Activated naive CD4-positive, alpha-beta T cell treated with anti-CD3 and anti-CD28 coated beads for 36 hours (primary cell): ENCODE measurements at regions of chr5 and their contacts with region 1.

Region 1: GRCh38 chr5:142864725-142865260 is 94.6 kb downstream of the ARHGAP26 start:
- DNase-seq: no peak
- H3K4me3 Mint-ChIP-seq: no peak overlapping the region
- H3K27ac Mint-ChIP-seq: peak overlapping the region; percentile 89
- H3K4me1 Mint-ChIP-seq: peaks cover 30% of the 10 kb centered on the region
- H3K27me3 Mint-ChIP-seq: no peaks in the 10 kb centered on the region

Region 2: DNA sequence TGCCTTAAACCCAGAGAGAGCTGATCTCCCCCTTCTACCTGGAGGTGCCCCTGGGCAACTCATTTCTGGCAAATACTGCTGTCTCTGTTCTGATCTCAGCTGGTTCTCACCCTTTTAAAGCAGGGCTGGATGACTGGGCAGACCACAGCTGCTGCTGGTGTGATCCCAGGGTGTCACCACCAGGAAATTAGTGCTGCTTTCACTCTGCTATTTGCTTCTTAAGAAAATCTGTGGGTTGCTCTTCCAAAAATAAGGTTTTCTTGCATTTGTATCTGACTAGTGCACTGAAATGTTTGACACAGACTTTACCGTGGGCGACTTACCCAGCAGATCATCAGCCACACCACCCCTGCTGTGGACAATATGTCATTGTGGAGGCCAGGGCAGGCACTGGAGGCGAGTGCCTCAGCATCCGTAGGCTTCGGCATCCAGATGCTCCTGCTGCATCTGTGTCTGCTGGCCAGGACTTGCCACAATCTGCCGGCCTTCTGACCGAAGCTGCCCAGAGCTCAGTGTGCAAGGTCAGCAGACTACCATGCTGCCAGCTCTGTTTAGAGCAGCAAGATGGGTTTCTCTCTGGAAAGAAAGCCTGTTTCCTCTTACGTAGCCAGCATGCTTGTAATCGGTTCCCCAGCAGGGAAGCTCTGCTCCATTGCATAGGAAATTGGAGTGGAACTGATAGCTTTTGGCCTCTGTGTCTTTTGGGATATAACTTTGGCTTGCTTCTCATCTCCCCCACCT is 81.0 kb before region 1 on chr5:
- CTCF ChIA-PET with region 1: interaction called, 14 read pairs
- intact Hi-C with region 1: loop called (anchors 1 kb)
- DNase-seq: peak; percentile 88
- H3K4me3 Mint-ChIP-seq: no peak overlapping the region
- H3K27ac Mint-ChIP-seq: peak overlapping the region; percentile 34
- H3K4me1 Mint-ChIP-seq: peaks cover 62% of the 10 kb centered on the region
- H3K27me3 Mint-ChIP-seq: no peaks in the 10 kb centered on the region